ENCODE measurements at regions of chr15 and their contacts with region 1.

Region 1: DNA sequence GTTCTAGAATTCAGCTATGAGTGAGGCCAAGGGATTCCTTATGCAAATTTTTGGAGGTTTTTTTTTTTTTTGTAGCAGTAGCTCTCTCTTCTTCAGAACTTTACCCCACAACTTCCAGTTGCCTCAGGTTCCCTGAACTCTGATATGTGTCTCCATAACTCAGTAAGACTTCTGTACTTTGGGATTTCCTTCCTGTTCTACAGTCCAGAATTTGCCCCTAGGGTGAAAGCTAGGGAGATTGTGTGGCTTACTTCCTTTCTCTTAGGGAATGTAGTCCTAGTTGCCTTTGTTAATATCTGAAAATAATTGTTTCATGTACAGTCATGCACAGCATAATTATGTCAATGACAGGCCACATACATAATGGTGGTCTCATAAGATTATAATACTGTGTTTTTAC is 30.8 kb downstream of the LRRC28 start:
- DNase-seq: no peak
- ATAC-seq: no peak
- H3K4me3 ChIP-seq: no peak overlapping the region
- H3K27ac ChIP-seq: no peak overlapping the region
- H3K4me1 ChIP-seq: no peaks in the 10 kb centered on the region
- H3K27me3 ChIP-seq: no peaks in the 10 kb centered on the region

Region 2: DNA sequence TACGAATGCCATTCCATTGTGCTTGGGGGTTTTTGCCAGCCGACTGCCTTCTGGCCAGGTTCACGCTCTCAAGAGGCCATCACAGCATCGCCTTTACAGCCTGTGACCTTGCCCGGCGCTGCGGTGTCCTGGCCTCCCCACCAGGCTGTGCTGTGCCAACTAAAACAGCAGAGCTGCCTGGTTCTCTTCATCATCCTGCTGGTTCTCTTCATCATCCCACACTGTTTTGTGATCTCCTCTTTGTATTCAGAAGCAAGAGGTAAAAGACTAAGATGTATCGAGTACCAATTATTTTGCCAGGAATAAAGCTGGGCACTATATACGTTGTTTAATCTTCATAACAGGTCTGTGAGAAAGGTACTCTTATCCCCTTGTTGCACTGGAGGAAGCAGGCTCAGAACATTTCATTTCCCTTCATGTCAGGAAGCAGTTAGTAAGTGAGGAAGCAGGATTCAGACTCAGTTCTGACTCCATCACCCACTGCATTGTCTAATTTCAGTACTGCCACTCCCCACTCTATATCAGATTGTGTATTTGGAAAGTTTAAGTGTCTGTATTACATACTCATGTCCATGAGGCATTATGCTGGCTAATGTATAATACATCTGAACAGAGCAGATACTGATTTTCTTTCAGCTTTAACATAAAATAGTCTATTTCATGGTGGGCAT is 61.9 kb after region 1 on chr15:
- intact Hi-C with region 1: no loop called
- DNase-seq: peak; percentile 48 to 74
- ATAC-seq: no peak
- H3K4me3 ChIP-seq: no peak overlapping the region
- H3K27ac ChIP-seq: no peak overlapping the region
- H3K4me1 ChIP-seq: no peaks in the 10 kb centered on the region
- H3K27me3 ChIP-seq: no peaks in the 10 kb centered on the region

Region 3: GRCh38 chr15:99361541-99362185 is 79.5 kb after region 1 on chr15:
- intact Hi-C with region 1: loop called (anchors 10 kb)
- DNase-seq: no peak
- ATAC-seq: no peak
- H3K4me3 ChIP-seq: no peak overlapping the region
- H3K27ac ChIP-seq: no peak overlapping the region
- H3K4me1 ChIP-seq: no peaks in the 10 kb centered on the region
- H3K27me3 ChIP-seq: no peaks in the 10 kb centered on the region

Region 4: DNA sequence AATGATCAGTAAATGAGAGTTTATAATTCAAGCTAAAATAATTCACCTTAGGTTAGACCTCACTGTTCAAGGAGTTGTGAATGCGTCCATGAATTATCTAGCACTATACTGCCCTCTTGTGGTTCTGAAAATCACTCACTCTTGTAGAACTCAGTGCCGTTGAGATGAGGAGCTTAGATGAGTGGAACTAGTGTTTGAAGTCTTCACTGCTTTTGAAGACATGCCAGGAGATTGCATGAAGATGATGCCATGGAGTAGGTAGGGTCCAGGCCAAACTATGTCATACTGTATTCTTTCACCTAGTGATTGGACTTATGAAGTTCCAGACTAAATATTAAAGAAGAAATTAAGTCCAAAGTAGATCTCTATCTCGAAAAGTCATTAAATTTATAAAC is 422.3 kb after region 1 on chr15:
- intact Hi-C with region 1: loop called (anchors 5 kb)
- DNase-seq: no peak
- ATAC-seq: peak; percentile 90
- H3K4me3 ChIP-seq: no peak overlapping the region
- H3K27ac ChIP-seq: no peak overlapping the region
- H3K4me1 ChIP-seq: peaks cover 0 to 3% of the 10 kb centered on the region in 2 donors
- H3K27me3 ChIP-seq: no peaks in the 10 kb centered on the region